Colonic mucosa (tissue), 4 donors: ENCODE measurements at regions of chr18 and their contacts with region 1.

Region 1: GRCh38 chr18:35513181-35513936 is 15.6 kb upstream of the INO80C start:
- DNase-seq: peak; percentile 21
- H3K4me3 ChIP-seq: no peak overlapping the region
- H3K27ac ChIP-seq: no peak overlapping the region
- H3K4me1 ChIP-seq: no peaks in the 10 kb centered on the region
- H3K27me3 ChIP-seq: no peaks in the 10 kb centered on the region
- CTCF ChIP-seq: no peak

Region 2: GRCh38 chr18:35407871-35408481 is 105.4 kb before region 1 on chr18:
- intact Hi-C with region 1: loop called (anchors 5 kb)
- DNase-seq: peak; percentile 74
- H3K4me3 ChIP-seq: no peak overlapping the region
- H3K27ac ChIP-seq: no peak overlapping the region
- H3K4me1 ChIP-seq: peaks cover 4% of the 10 kb centered on the region
- H3K27me3 ChIP-seq: no peaks in the 10 kb centered on the region
- CTCF ChIP-seq: peak; percentile 76